Right ventricle myocardium superior (tissue), 1 donor: ENCODE measurements at regions of chr7 and their contacts with region 1.

Region 1: DNA sequence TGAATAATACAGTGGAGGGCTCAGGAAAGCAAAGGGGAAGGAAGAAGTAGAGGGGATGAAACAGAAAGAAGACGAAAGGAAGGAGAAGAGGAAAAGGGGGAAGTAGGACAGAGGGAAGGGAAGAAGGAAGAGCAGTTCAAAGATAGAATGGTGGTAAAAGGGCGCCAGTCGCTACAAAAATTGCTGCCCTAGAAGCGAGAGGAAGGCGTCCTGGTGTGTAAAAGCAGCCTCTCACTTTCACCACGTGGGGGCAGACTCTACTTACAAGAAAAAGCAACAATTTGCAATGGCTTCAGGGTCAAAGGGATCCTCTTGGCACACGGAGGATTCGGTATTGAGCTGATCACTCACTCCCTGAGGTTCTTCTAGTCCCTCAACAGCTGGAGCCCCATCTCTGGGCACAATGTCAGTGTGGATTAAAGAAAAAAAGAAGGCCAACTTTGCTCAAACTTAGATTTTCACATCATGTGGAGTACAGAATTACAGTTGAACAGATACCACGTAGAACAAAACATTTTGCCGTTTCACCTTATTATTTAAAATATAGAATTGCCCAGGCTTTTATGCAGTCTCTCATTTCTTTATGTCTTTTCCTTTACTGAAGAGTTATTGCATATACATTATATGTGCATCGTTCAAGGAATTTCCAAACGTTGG is 31.4 kb upstream of the NPVF start:
- DNase-seq: peak; percentile 53
- ATAC-seq: peak; percentile 87

Region 2: GRCh38 chr7:25389489-25390106 is 129.9 kb after region 1 on chr7:
- intact Hi-C with region 1: loop called (anchors 2 kb)
- DNase-seq: no peak
- ATAC-seq: peak; percentile 42

Region 3: GRCh38 chr7:25851332-25852210 is 591.9 kb after region 1 on chr7:
- intact Hi-C with region 1: loop called (anchors 2 kb)
- DNase-seq: peak; percentile 87
- ATAC-seq: peak; percentile 84